ENCODE measurements at regions of chr1 and their contacts with region 1.

Region 1: GRCh38 chr1:159900086-159900680 is at the start of gene CFAP45:
- DNase-seq: peak; percentile 83
- H3K4me3 ChIP-seq: no peak within 1 kb of the TSS
- H3K27ac ChIP-seq: no peak within 1 kb of the TSS
- H3K4me1 ChIP-seq: peaks cover 11% of the 10 kb centered on the region
- H3K27me3 ChIP-seq: no peaks in the 10 kb centered on the region
- CTCF ChIP-seq: no peak
- total RNA-seq, gene CFAP45: 1.5 and 3.6 TPM in 2 replicates

Region 2: GRCh38 chr1:159922527-159923202 is 22.5 kb after region 1 on chr1:
- CTCF ChIA-PET with region 1: interaction called, 13 read pairs
- POLR2A ChIA-PET with region 1: no interaction called
- intact Hi-C with region 1: no loop called
- DNase-seq: no peak
- H3K4me3 ChIP-seq: no peak overlapping the region
- H3K27ac ChIP-seq: peak overlapping the region; percentile 42
- H3K4me1 ChIP-seq: peaks cover 19% of the 10 kb centered on the region
- H3K27me3 ChIP-seq: no peaks in the 10 kb centered on the region
- CTCF ChIP-seq: no peak

Region 3: GRCh38 chr1:159991513-159991912 is 91.3 kb after region 1 on chr1:
- CTCF ChIA-PET with region 1: no interaction called
- POLR2A ChIA-PET with region 1: no interaction called
- intact Hi-C with region 1: no loop called
- DNase-seq: peak; percentile 51
- H3K4me3 ChIP-seq: no peak overlapping the region
- H3K27ac ChIP-seq: no peak overlapping the region
- H3K4me1 ChIP-seq: no peaks in the 10 kb centered on the region
- H3K27me3 ChIP-seq: no peaks in the 10 kb centered on the region
- CTCF ChIP-seq: no peak

Region 4: GRCh38 chr1:160646711-160647328 is 746.6 kb after region 1 on chr1 and contains the start of gene SLAMF1:
- CTCF ChIA-PET with region 1: no interaction called
- POLR2A ChIA-PET with region 1: no interaction called
- intact Hi-C with region 1: no loop called
- DNase-seq: peak; percentile 98
- H3K4me3 ChIP-seq: peak within 1 kb of the TSS; percentile 5
- H3K27ac ChIP-seq: peak within 1 kb of the TSS; percentile 64
- H3K4me1 ChIP-seq: peaks cover 31% of the 10 kb centered on the region
- H3K27me3 ChIP-seq: no peaks in the 10 kb centered on the region
- CTCF ChIP-seq: no peak
- total RNA-seq, gene SLAMF1: 1.1 and 2.2 TPM in 2 replicates

Measured in A673 (cell line).